ENCODE measurements at regions of chr15 and their contacts with region 1.

Region 1: GRCh38 chr15:40746916-40747514 is 8.0 kb downstream of the RMDN3 start:
- DNase-seq: no peak
- H3K27ac ChIP-seq: peak overlapping the region; percentile 86
- CTCF ChIP-seq: no peak

Region 2: GRCh38 chr15:40098489-40099261 is 648.3 kb before region 1 on chr15:
- CTCF ChIA-PET with region 1: no interaction called
- POLR2A ChIA-PET with region 1: no interaction called
- DNase-seq: peak; percentile 85
- H3K27ac ChIP-seq: peak overlapping the region; percentile 78
- CTCF ChIP-seq: no peak

Region 3: DNA sequence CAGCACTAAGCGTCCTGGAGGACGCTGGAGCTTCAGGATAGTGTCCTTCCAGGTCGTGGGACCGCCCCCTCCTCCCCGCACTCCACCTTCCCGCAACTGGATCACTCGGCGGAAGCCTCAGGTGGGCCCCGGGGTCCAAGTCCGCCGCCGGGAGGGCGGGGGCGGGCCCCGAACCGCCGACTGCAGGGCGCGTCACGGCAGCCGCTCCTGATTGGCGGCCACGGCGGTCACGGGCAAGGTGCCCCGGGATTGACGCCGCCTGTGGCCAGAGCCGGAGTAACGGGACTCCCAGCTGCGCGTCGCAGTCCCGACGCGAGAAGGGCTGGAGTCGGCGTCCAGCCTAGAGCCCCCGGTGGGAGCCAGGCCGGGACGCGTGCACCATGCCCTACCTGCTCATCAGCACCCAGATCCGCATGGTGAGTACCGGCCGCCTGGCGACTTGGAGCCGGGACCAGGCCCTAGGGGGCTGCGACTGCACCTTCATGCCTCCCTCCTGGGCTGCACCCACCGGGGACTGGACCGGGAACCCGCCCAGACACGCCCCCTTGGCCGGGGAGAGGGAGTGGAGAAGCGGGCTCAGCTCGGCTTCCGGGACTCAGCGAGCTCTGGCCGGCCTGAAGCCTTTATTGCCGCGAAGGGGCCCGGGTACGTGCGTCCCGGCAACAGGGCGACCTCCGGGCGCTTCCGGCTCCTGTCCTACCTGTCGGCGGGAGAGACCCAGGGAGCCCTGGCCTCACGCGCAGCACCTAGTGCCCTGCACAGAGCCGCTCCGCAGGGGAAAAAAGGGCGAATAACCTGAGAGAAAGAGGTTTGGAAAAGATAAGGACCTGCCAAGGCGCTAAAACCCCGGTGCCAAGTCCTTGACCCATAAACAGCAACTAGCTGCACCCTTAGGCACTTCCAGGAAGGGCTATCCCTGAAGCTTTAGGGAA is 17.1 kb after region 1 on chr15 and contains the start of gene GCHFR:
- CTCF ChIA-PET with region 1: interaction called, 21 read pairs
- POLR2A ChIA-PET with region 1: interaction called, 3 read pairs
- DNase-seq: peak; percentile 68
- H3K27ac ChIP-seq: peak within 1 kb of the TSS; percentile 99
- CTCF ChIP-seq: peak; percentile 71

Region 4: GRCh38 chr15:40769274-40770146 is 22.5 kb after region 1 on chr15 and contains the start of gene C15orf62:
- CTCF ChIA-PET with region 1: interaction called, 21 read pairs
- POLR2A ChIA-PET with region 1: interaction called, 3 read pairs
- DNase-seq: peak; percentile 91
- H3K27ac ChIP-seq: peak within 1 kb of the TSS; percentile 99
- CTCF ChIP-seq: no peak

Region 5: DNA sequence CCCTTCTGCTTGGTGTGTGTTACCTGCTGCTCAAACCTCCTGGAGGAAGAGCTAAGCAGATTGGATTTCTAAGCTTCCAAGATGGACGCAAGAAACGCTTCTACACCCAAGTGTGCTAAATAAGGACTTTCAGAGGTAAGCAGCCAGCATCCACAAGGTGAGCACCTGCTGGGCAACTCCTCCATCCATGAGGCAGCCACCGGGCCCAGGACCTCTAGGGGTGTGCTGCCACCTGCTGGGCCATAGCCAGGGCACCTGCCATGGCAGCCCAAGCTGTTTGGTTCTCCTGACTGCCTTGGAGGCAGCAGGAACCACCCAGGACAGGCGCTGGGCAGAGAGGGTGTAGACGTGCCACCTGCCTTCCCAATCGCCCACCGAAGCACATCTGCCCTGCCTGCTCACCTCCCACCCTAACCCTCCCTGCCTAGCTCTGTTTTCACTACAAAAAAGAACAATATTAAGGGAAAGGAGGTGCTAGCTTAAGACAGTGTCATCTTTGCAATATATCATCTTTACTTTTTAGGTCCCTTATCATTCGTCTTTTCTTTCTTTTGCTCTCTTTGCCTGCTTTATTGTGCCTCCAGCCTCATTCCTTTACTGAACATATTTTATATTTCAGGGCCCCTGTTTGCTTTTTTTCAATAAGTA is 35.7 kb after region 1 on chr15:
- CTCF ChIA-PET with region 1: interaction called, 27 read pairs
- POLR2A ChIA-PET with region 1: no interaction called
- DNase-seq: peak; percentile 74
- H3K27ac ChIP-seq: no peak overlapping the region
- CTCF ChIP-seq: peak; percentile 87